ENCODE measurements at regions of chr20 and their contacts with region 1.

Region 1: DNA sequence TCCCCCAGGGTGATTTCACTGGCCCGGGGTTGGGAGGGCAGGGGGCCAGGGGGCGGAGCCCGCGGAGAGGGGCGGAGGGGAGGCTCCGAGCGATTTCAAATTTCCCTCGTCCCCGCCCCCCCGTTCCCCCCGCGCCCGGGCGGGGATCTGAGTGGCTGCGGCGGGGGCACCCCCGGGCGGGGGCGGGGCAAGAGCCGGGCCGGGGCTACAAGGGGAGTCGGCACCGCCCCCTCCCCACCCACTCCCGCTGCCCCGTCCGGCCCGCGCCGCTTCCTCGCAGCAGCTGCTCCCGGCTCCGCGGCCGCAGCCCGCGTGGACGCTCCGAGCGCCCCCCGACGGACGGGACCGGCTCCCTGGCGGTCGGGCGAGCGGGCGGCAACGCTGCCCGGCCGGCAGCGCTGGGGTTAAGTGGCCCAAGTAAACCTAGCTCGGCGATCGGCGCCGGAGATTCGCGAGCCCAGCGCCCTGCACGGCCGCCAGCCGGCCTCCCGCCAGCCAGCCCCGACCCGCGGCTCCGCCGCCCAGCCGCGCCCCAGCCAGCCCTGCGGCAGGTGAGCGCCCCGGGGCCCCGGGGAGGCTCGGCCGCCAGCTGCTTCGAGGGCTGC is at the start of gene DNMT3B:
- DNase-seq: peak; percentile 83
- ATAC-seq: peak; percentile 86
- H3K4me3 Mint-ChIP-seq: peak within 1 kb of the TSS; percentile 75
- H3K27ac Mint-ChIP-seq: peak within 1 kb of the TSS; percentile 66
- H3K4me1 Mint-ChIP-seq: peaks cover 18% of the 10 kb centered on the region
- H3K27me3 Mint-ChIP-seq: peaks cover 9% of the 10 kb centered on the region
- total RNA-seq, gene DNMT3B: 3.3 to 4.7 TPM

Region 2: DNA sequence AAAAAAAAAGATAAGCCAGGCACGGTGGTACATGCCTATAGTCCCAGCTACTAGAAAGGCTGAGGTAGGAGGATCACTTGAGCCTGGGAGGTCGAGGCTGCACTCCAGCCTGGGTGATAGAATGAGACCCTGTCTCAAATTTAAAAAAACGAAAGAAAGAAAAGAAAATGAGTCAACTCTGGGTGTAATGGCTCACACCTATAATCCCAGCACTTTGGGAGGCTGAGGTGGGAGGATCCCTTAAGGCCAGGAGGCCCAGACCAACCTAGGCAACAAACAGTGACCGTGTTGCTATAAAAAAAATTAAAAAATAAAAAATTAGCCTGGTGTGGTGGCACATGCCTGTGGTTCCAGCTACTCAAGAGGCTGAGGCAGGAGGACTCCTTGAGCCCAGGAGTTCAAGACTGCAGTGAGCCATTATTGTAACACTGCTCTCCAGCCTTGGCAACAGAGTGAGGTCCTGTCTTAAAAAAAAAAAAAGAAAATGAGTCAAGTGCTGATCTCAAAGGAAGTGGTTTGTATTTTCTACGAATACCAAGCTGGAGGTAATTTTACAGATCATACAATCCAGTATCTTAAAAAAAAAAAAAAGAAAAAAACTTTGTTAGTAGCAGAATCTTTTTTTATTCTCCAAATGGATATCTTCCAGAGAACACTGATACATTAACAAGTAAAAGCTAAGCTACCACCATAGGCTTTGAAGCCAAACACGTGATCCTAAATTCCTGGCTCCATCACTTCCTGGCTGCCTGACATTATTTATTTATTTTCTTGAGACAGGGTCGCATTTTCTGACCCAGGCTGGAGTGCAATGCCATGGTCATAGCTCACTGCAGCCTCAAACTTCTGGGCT is 24.7 kb before region 1 on chr20:
- CTCF ChIA-PET with region 1: interaction called, 11 read pairs
- DNase-seq: peak; percentile 68
- ATAC-seq: peak; percentile 89
- H3K4me3 Mint-ChIP-seq: no peak overlapping the region
- H3K27ac Mint-ChIP-seq: peak overlapping the region; percentile 87
- H3K4me1 Mint-ChIP-seq: peaks cover 47% of the 10 kb centered on the region
- H3K27me3 Mint-ChIP-seq: no peaks in the 10 kb centered on the region

Region 3: DNA sequence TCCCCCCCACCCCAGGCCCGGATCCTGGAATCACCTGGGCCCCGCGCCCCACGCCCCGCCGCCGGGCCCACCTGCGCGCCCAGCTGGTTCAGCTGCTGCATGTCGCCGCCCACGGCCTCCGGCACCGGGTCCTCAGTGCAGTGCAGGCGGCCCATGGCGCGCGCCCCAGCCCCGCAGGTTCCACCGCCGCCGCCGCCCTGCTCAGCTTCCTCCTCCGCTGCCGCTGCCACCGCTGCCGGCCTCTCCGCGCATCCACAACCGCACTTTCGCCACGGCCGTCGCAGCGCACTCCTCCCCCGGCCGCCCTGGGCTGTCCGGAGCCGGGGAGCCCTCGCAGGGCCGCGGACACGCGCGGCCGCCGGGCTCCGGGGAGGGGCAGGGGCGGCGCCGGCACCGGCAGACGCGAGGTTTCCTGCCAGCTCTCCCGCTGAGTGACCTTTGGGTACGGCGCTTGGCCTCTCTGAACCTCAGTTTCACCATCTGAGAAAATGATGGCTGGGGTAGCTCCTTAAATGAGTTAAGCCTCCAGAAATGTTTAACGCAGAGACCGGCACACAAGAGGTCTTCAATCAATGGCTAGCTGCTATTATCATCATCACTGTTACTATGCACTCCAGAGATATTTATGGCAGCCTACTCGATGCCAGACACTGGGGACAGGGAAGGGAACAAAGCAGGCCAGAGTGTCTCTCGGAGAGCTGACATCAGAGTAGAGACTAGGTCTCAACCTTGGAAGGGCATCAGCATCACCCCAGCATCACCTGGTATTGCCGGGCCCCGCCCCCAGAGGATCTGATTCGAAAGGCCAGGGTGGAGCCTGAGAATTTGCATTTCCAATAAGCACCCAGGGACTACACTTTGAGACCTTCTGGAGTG is 18.8 kb before region 1 on chr20 and contains the start of gene COMMD7:
- CTCF ChIA-PET with region 1: interaction called, 10 read pairs
- DNase-seq: peak; percentile 87
- ATAC-seq: peak; percentile 84
- H3K4me3 Mint-ChIP-seq: peak within 1 kb of the TSS; percentile 99
- H3K27ac Mint-ChIP-seq: peak within 1 kb of the TSS; percentile 99
- H3K4me1 Mint-ChIP-seq: peaks cover 38% of the 10 kb centered on the region
- H3K27me3 Mint-ChIP-seq: no peaks in the 10 kb centered on the region
- total RNA-seq, gene COMMD7: 54.2 to 59.5 TPM

Region 4: GRCh38 chr20:32819992-32820710 is 57.9 kb after region 1 on chr20:
- CTCF ChIA-PET with region 1: no interaction called
- DNase-seq: peak; percentile 86
- ATAC-seq: peak; percentile 81
- H3K4me3 Mint-ChIP-seq: peak overlapping the region; percentile 98
- H3K27ac Mint-ChIP-seq: peak overlapping the region; percentile 96
- H3K4me1 Mint-ChIP-seq: peaks cover 35% of the 10 kb centered on the region
- H3K27me3 Mint-ChIP-seq: no peaks in the 10 kb centered on the region

Region 5: DNA sequence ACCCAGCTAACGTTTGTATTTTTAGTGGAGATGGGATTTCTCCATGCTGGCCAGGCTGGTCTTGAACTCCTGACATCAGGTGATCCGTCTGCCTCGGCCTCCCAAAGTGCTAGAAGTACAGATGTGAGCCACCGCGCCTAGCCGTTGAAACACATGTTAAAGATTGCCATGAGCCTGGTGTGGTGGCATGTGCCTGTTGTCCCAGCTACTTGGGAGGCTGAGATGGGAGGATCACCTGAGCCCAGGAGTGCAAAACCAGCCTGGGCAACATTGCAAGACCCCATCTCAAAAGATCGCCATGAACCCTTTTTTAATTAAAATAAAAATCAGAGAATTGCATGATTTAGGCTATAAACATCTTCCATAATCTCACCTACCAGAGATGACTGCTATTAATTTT is 99.2 kb after region 1 on chr20:
- CTCF ChIA-PET with region 1: no interaction called
- DNase-seq: no peak
- ATAC-seq: no peak
- H3K4me3 Mint-ChIP-seq: no peak overlapping the region
- H3K27ac Mint-ChIP-seq: no peak overlapping the region
- H3K4me1 Mint-ChIP-seq: peaks cover 10% of the 10 kb centered on the region
- H3K27me3 Mint-ChIP-seq: no peaks in the 10 kb centered on the region

Measured in activated CD8-positive, alpha-beta memory T cell treated with anti-CD3 and anti-CD28 coated beads, Interleukin-2, amount 10 ng/mL, durations not matched to agents 7 days and 5 days (primary cell).